CD8-positive, alpha-beta T cell (primary cell): ENCODE measurements at regions of chr5 and their contacts with region 1.

Region 1: DNA sequence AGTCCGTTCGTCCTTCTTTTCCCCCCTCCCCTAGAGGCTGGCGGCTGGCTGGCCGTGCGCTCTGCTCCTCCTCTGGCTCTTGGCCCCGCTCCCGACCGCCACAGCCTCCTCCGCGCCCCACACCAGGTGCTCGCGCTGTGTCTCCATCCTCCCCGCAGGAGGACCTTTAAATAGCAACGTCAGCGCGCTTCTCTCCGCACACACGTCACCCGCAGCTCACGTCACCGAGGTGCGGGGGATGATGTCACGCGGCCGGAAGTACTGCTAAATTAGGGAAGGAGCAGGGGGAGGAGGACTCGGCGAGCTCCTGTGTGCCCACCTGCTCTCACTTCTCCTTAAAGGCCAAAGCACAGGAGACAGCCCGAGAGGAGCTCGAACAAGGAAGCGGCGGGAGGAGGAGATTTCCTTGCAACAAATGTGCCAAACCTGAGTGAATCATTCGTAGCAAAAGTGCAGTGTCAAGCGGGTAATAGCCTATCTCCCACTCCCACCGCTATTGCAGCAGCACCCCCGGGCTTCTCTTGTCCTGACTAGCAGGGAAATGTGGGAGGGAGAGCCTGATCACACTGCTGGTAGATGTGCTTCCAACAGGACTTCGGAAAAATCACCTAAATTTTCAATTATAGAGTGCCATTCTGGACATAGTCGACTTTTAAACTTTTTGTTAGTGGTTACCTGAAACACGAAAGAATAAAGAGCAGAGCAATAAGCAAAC is 614 bp upstream of the HOMER1 start:
- DNase-seq: peak; percentile 80 to 98 (median 92)
- ATAC-seq: peak; percentile 84
- H3K4me3 ChIP-seq: peak overlapping the region; percentile 62 to 73
- H3K4me3 Mint-ChIP-seq: peak overlapping the region; percentile 99
- H3K27ac ChIP-seq: peak overlapping the region; percentile 91 to 97
- H3K27ac Mint-ChIP-seq: peak overlapping the region; percentile 99
- H3K4me1 ChIP-seq: peaks cover 19% of the 10 kb centered on the region
- H3K4me1 Mint-ChIP-seq: peaks cover 42% of the 10 kb centered on the region
- H3K27me3 ChIP-seq: peaks cover 6 to 7% of the 10 kb centered on the region in 2 experiments
- H3K27me3 Mint-ChIP-seq: peaks cover 5% of the 10 kb centered on the region
- CTCF ChIP-seq: peak; percentile 13

Region 2: DNA sequence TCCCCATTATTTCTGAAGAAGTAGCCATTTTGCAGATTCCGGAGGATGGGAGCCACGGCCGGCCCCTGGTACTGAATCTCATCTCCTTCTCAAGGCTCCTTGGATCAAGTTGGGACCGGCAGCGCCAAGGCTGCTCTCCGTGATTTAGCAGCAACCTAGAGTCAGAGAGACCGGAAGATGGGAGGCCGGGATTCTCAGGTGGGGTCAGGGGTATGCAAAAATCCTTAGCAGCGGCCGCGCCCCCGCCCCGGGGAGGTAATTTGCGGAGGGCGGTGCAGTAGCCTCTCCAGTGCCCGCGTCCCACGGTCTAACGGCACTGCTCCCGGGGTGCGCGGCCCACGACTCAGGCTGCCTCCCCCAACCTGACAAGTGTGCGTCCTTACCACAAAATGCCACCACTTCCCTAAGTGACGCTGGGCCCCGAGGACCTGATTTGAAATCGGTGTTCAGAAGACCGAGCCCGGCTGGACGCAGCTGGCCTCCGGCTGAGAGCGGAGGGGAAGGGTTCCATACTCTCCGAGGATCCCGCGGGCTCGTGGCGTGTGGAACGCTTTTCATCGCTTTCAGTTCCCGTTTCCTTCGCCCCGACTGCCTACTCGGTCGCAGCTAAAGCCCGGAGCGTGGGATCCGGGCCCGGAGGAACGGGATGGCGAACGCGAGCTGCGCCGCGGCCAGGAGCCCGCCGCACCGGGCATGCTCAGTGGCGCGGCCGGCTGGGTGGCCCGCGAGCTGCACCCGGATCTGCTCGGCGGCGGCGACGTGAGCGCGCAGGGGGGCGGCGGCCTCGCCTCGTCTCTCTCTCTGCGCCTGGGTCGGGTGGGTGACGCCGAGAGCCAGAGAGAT is 1154.5 kb before region 1 on chr5 and contains the start of gene SCAMP1:
- CTCF ChIA-PET with region 1: no interaction called
- POLR2A ChIA-PET with region 1: no interaction called
- intact Hi-C with region 1: loop called in 1 of 2 experiments (anchors 5 kb)
- DNase-seq: peak; percentile 88 to 96 (median 91)
- ATAC-seq: peak; percentile 78
- H3K4me3 ChIP-seq: peak within 1 kb of the TSS; percentile 95
- H3K4me3 Mint-ChIP-seq: peak within 1 kb of the TSS; percentile 86
- H3K27ac ChIP-seq: peak within 1 kb of the TSS; percentile 92 to 97
- H3K27ac Mint-ChIP-seq: peak within 1 kb of the TSS; percentile 96
- H3K4me1 ChIP-seq: peaks cover 27% of the 10 kb centered on the region
- H3K4me1 Mint-ChIP-seq: peaks cover 53% of the 10 kb centered on the region
- H3K27me3 ChIP-seq: no peaks in the 10 kb centered on the region
- H3K27me3 Mint-ChIP-seq: no peaks in the 10 kb centered on the region
- CTCF ChIP-seq: no peak
- total RNA-seq, gene SCAMP1: 19.2 to 20.3 TPM

Region 3: GRCh38 chr5:79235634-79236363 is 278.7 kb before region 1 on chr5 and contains the start of gene JMY:
- CTCF ChIA-PET with region 1: no interaction called
- POLR2A ChIA-PET with region 1: interaction called, 4 read pairs
- intact Hi-C with region 1: loop called (anchors 2 to 5 kb)
- DNase-seq: peak; percentile 72 to 94 (median 85)
- ATAC-seq: peak; percentile 86
- H3K4me3 ChIP-seq: peak within 1 kb of the TSS; percentile 79 to 81
- H3K4me3 Mint-ChIP-seq: peak within 1 kb of the TSS; percentile 97
- H3K27ac ChIP-seq: peak within 1 kb of the TSS; percentile 91 to 98
- H3K27ac Mint-ChIP-seq: peak within 1 kb of the TSS; percentile 96
- H3K4me1 ChIP-seq: peaks cover 28% of the 10 kb centered on the region
- H3K4me1 Mint-ChIP-seq: peaks cover 34% of the 10 kb centered on the region
- H3K27me3 ChIP-seq: no peaks in the 10 kb centered on the region
- H3K27me3 Mint-ChIP-seq: no peaks in the 10 kb centered on the region
- CTCF ChIP-seq: no peak
- total RNA-seq, gene JMY: 104 TPM

Region 4: GRCh38 chr5:79612667-79613198 is 98.2 kb after region 1 on chr5:
- CTCF ChIA-PET with region 1: no interaction called
- POLR2A ChIA-PET with region 1: interaction called, 7 read pairs
- intact Hi-C with region 1: loop called (anchors 2 kb)
- DNase-seq: no peak
- ATAC-seq: no peak
- H3K4me3 ChIP-seq: peak overlapping the region; percentile 71 to 97
- H3K4me3 Mint-ChIP-seq: peak overlapping the region; percentile 96
- H3K27ac ChIP-seq: peak overlapping the region; percentile 89 to 91
- H3K27ac Mint-ChIP-seq: peak overlapping the region; percentile 98
- H3K4me1 ChIP-seq: peaks cover 26% of the 10 kb centered on the region
- H3K4me1 Mint-ChIP-seq: peaks cover 39% of the 10 kb centered on the region
- H3K27me3 ChIP-seq: no peaks in the 10 kb centered on the region
- H3K27me3 Mint-ChIP-seq: peaks cover 9% of the 10 kb centered on the region
- CTCF ChIP-seq: no peak

Region 5: DNA sequence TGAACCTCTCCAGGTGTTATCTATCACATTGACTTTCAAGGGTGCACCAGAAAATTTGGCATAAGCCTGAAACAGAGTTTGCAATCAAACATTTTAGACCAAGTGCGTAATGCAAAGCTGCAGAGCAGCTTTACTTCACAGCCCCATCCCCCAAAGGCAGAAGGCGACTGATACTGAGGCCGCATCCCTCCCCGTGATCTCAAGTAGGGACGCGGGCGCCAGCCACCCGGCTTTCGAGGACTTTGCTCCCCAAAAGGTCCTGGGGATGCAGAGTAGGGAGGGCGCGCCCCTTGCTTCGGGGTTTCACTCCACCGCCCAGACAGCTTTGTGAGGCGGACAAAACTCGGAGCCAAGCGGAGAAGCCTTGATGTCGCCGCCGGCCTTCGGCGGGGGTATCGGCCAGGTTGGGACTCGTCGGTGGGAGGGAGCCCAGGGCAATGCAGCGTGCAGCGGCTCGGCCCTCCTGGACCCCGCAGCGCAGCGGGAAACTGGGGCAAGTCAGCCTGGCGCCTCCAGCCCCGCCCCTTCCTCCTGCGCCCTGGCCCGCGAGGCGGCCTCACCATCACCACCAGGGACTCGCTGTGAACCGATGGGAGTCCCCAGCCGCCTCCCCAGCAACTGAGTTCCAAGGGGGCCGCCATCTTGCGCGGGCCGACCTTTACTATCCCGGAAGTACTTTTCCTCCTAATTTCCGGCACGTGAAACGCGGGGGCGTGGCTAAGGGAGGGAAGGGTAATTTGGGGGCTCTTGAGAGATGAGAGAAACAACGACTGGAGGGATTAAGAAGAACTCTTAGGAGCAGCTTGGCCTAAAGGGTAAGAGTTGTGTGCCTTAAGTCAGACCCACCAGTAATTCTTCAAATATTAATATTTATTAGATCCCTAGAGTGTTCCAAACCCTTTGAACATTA is 476.3 kb after region 1 on chr5 and contains the start of gene MTX3:
- CTCF ChIA-PET with region 1: no interaction called
- POLR2A ChIA-PET with region 1: no interaction called
- intact Hi-C with region 1: loop called (anchors 2 to 10 kb)
- DNase-seq: peak; percentile 75 to 93 (median 89)
- ATAC-seq: peak; percentile 95
- H3K4me3 ChIP-seq: peak within 1 kb of the TSS; percentile 60 to 72
- H3K4me3 Mint-ChIP-seq: peak within 1 kb of the TSS; percentile 86
- H3K27ac ChIP-seq: peak within 1 kb of the TSS; percentile 51 to 70
- H3K27ac Mint-ChIP-seq: peak within 1 kb of the TSS; percentile 88
- H3K4me1 ChIP-seq: peaks cover 20% of the 10 kb centered on the region
- H3K4me1 Mint-ChIP-seq: peaks cover 32% of the 10 kb centered on the region
- H3K27me3 ChIP-seq: no peaks in the 10 kb centered on the region
- H3K27me3 Mint-ChIP-seq: peaks cover 11% of the 10 kb centered on the region
- CTCF ChIP-seq: no peak
- total RNA-seq, gene MTX3: 26.2 to 27.1 TPM